HAP-1 (cell line): ENCODE measurements at regions of chr7 and their contacts with region 1.

Region 1: DNA sequence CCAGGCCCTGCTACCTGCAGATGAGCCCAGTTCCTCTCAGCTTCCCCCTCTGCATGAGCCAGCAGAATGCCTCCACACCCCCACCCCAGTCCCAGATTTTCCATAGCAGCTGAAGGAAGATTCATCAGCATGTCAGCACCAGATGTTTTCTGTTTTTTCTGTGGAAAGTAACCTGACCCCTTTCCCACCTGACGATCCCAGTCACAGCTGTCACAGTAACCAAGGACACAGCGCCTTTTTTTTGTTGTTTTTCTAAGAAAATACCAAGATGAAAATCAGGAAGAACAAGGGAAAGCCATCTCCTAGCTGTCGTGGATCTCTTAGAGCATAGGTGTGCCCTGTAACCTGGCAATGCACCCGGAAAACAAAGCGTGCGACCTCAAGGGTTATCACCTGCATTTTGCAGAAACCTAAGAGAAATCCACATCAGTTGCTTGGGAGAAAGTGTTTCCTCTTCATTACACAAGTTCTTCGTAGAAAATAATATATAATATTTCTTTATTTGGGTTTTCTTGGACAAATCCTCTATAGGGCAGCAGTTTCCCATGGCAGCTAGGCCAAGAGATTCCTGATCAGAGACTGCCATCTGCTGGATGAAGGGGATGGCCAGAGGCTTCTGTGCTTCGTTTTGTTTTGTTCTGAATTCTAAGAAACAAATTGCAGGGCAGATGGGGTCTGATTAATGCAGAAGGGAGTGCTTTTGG is 401.9 kb downstream of the TNS3 start:
- DNase-seq: peak; percentile 21 to 51
- H3K4me3 ChIP-seq: no peak overlapping the region
- H3K4me1 ChIP-seq: no peaks in the 10 kb centered on the region
- H3K27me3 ChIP-seq: no peaks in the 10 kb centered on the region

Region 2: GRCh38 chr7:45917658-45918057 is 1262.3 kb before region 1 on chr7:
- in situ Hi-C with region 1: loop called (anchors 10 kb)
- DNase-seq: peak; percentile 43 to 88
- H3K4me3 ChIP-seq: no peak overlapping the region
- H3K4me1 ChIP-seq: no peaks in the 10 kb centered on the region
- H3K27me3 ChIP-seq: peaks cover 39% of the 10 kb centered on the region